AG04450 (cell line): ENCODE measurements at regions of chr5 and their contacts with region 1.

Region 1: GRCh38 chr5:43631182-43631910 is 28.4 kb downstream of the NNT start:
- DNase-seq: peak; percentile 60
- H3K4me3 ChIP-seq: no peak overlapping the region
- H3K27ac ChIP-seq: no peak overlapping the region
- H3K27me3 ChIP-seq: no peaks in the 10 kb centered on the region
- CTCF ChIP-seq: peak; percentile 77

Region 2: DNA sequence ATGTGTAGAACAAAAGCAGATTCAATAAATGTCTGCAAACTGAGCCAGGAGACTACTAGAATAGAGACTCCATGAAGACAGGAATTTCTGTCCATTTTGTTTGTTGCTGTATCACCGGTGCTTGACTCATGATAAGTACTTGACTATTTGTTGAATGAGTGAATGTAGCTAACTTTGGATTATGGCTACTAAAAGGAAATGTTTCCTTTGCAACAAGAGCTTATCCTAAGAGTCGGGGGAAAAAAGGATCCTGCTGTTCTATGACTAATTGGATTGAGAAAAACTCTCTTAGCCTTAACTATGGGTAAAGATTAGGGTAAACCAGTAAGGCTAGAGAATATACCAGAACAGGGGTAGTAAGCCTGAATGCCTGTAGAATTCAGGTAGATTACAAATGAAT is 78.0 kb before region 1 on chr5:
- CTCF ChIA-PET with region 1: interaction called, 10 read pairs
- POLR2A ChIA-PET with region 1: no interaction called
- DNase-seq: no peak
- H3K4me3 ChIP-seq: no peak overlapping the region
- H3K27ac ChIP-seq: no peak overlapping the region
- H3K27me3 ChIP-seq: no peaks in the 10 kb centered on the region
- CTCF ChIP-seq: no peak

Region 3: GRCh38 chr5:43602461-43603343 is 28.6 kb before region 1 on chr5 and contains the start of gene NNT:
- CTCF ChIA-PET with region 1: interaction called, 16 read pairs
- POLR2A ChIA-PET with region 1: no interaction called
- DNase-seq: no peak
- H3K4me3 ChIP-seq: peak within 1 kb of the TSS; percentile 70
- H3K27ac ChIP-seq: peak within 1 kb of the TSS; percentile 63
- H3K27me3 ChIP-seq: no peaks in the 10 kb centered on the region
- CTCF ChIP-seq: no peak
- polyA plus RNA-seq, gene NNT: 55.4 and 64.6 TPM in 2 replicates

Region 4: GRCh38 chr5:43646992-43647391 is 15.6 kb after region 1 on chr5:
- CTCF ChIA-PET with region 1: interaction called, 107 read pairs
- POLR2A ChIA-PET with region 1: interaction called, 4 read pairs
- DNase-seq: no peak
- H3K4me3 ChIP-seq: no peak overlapping the region
- H3K27ac ChIP-seq: no peak overlapping the region
- H3K27me3 ChIP-seq: no peaks in the 10 kb centered on the region
- CTCF ChIP-seq: peak; percentile 52

Region 5: DNA sequence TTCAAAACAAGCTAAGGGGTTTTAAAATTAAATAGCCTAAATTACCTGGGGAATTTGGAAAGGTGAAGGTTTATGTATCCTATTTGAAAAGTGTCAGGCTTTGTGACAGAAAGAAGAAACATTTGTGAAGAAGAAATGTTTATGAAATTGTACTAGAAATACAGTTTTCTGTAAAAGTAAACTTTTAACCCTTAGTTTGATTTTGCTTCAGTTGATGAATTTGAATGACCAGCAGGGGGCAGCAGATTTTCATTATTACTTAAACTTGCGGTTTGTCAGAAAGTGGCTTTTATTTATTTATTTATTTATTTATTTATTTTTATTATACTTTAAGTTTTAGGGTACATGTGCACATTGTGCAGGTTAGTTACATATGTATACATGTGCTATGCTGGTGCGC is 29.8 kb after region 1 on chr5:
- CTCF ChIA-PET with region 1: interaction called, 22 read pairs
- POLR2A ChIA-PET with region 1: no interaction called
- DNase-seq: no peak
- H3K4me3 ChIP-seq: no peak overlapping the region
- H3K27ac ChIP-seq: no peak overlapping the region
- H3K27me3 ChIP-seq: no peaks in the 10 kb centered on the region
- CTCF ChIP-seq: peak; percentile 53

Region 6: DNA sequence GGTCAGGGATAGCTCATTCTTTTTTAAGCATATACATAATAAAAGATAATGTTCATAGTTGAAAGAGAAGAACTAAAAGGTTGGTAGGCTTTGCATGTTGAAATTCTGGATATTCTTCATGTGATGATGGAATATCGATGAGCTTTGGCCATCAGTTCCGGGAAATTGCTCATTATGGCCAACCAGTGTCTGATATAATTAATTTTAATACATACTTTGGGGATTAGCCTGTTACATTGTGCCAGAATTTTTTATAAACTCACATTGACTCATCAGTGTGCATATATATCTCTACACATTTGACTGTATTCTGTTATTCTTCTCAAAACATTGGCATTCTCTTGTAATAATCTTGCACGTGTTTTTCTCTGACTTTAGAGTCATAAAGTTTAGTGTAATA is 55.9 kb after region 1 on chr5:
- CTCF ChIA-PET with region 1: interaction called, 16 read pairs
- POLR2A ChIA-PET with region 1: no interaction called
- DNase-seq: no peak
- H3K4me3 ChIP-seq: no peak overlapping the region
- H3K27ac ChIP-seq: no peak overlapping the region
- H3K27me3 ChIP-seq: no peaks in the 10 kb centered on the region
- CTCF ChIP-seq: no peak

Region 7: GRCh38 chr5:44085083-44085482 is 453.7 kb after region 1 on chr5:
- CTCF ChIA-PET with region 1: no interaction called
- POLR2A ChIA-PET with region 1: no interaction called
- DNase-seq: no peak
- H3K4me3 ChIP-seq: no peak overlapping the region
- H3K27ac ChIP-seq: no peak overlapping the region
- H3K27me3 ChIP-seq: no peaks in the 10 kb centered on the region
- CTCF ChIP-seq: no peak

Region 8: DNA sequence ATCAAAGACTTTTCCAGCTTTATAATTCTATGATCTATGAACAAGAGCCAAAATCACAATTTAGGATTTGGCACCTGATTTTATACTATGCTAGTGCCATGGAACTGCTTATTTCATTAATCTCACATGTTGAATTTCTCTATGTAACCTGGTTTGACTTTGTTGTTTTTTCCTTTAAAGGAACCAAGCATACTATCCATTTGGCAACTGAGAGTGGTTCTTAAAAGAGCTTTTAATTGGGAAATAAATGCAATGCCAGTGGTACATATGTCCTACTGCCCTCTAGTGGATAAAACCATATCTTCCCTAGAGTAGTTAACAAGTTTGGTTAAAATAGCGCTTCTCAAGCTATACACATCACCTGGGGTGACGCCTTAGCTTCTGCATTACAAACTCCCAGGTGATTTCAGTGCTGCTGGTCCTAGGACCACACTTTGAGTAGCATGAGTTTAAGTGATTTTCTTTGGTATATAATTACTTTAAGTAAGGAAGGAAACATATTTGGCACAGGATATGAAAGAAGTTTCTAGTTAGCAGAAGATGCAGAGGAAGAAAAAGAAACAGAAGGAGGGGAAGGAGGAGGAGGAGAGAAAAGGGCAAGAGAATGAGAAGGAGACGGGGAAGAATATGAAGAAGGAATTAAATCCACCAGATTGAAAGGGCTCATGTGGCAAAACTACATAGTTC is 701.1 kb after region 1 on chr5:
- CTCF ChIA-PET with region 1: interaction called, 121 read pairs
- POLR2A ChIA-PET with region 1: no interaction called
- DNase-seq: peak; percentile 21
- H3K4me3 ChIP-seq: no peak overlapping the region
- H3K27ac ChIP-seq: no peak overlapping the region
- H3K27me3 ChIP-seq: no peaks in the 10 kb centered on the region
- CTCF ChIP-seq: peak; percentile 66